Natural killer cell (primary cell): ENCODE measurements at regions of chr11 and their contacts with region 1.

Region 1: GRCh38 chr11:313787-314547 is at the start of gene IFITM1:
- DNase-seq: peak in 1 of 2 donors; percentile 80
- ATAC-seq: peak; percentile 24 to 59 (median 47)
- H3K4me3 ChIP-seq: peak within 1 kb of the TSS; percentile 75
- H3K4me3 Mint-ChIP-seq: peak within 1 kb of the TSS; percentile 97
- H3K27ac ChIP-seq: peak within 1 kb of the TSS; percentile 72
- H3K27ac Mint-ChIP-seq: peak within 1 kb of the TSS; percentile 92 to 99
- H3K4me1 ChIP-seq: peaks cover 45% of the 10 kb centered on the region
- H3K4me1 Mint-ChIP-seq: peaks cover 55 to 57% of the 10 kb centered on the region in 2 donors
- H3K27me3 ChIP-seq: no peaks in the 10 kb centered on the region
- H3K27me3 Mint-ChIP-seq: no peaks in the 10 kb centered on the region
- CTCF ChIP-seq: no peak
- total RNA-seq, gene IFITM1: 540 to 809 (median 710) TPM

Region 2: GRCh38 chr11:326842-327580 is 13.0 kb after region 1 on chr11:
- intact Hi-C with region 1: loop called (anchors 2 kb)
- DNase-seq: peak in 1 of 2 donors; percentile 89
- ATAC-seq: peak; percentile 51 to 75 (median 56)
- H3K4me3 ChIP-seq: peak overlapping the region; percentile 6
- H3K4me3 Mint-ChIP-seq: peak overlapping the region; percentile 67
- H3K27ac ChIP-seq: peak overlapping the region; percentile 89
- H3K27ac Mint-ChIP-seq: peak overlapping the region; percentile 78 to 94
- H3K4me1 ChIP-seq: peaks cover 73% of the 10 kb centered on the region
- H3K4me1 Mint-ChIP-seq: peaks cover 57 to 69% of the 10 kb centered on the region in 2 donors
- H3K27me3 ChIP-seq: no peaks in the 10 kb centered on the region
- H3K27me3 Mint-ChIP-seq: no peaks in the 10 kb centered on the region
- CTCF ChIP-seq: no peak

Region 3: DNA sequence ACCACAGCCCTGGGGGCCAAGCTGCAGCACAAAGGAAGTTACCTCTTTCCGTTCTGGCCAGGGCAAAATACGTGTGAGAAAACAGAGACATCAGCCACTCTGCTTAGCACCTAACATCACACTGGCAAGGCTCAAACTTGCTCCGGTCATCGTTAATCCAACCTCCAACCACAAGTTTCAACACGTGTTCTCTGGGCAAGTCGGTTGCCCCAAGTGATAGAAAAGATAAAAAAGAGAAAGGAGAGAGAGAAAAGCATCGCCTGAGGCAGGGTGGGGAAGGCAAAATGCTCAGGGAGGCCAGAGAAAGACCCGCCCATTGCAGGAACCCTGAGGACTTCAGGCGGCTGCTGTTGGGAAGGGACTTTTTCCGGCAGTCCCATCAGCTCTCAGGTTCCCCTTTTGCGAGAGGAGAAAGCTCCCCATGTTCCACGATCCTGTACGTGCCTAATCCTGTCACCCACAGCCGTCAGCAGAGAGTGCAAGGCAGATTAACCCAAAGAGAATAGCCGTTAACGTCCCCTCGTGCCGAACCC is 36.8 kb after region 1 on chr11:
- intact Hi-C with region 1: loop called (anchors 2 kb)
- DNase-seq: peak; percentile 43 to 49
- ATAC-seq: peak; percentile 74 to 87 (median 84)
- H3K4me3 ChIP-seq: no peak overlapping the region
- H3K4me3 Mint-ChIP-seq: peak overlapping the region; percentile 78
- H3K27ac ChIP-seq: peak overlapping the region; percentile 84
- H3K27ac Mint-ChIP-seq: peak overlapping the region; percentile 92 to 95
- H3K4me1 ChIP-seq: peaks cover 70% of the 10 kb centered on the region
- H3K4me1 Mint-ChIP-seq: peaks cover 43 to 58% of the 10 kb centered on the region in 2 donors
- H3K27me3 ChIP-seq: no peaks in the 10 kb centered on the region
- H3K27me3 Mint-ChIP-seq: no peaks in the 10 kb centered on the region
- CTCF ChIP-seq: no peak

Region 4: DNA sequence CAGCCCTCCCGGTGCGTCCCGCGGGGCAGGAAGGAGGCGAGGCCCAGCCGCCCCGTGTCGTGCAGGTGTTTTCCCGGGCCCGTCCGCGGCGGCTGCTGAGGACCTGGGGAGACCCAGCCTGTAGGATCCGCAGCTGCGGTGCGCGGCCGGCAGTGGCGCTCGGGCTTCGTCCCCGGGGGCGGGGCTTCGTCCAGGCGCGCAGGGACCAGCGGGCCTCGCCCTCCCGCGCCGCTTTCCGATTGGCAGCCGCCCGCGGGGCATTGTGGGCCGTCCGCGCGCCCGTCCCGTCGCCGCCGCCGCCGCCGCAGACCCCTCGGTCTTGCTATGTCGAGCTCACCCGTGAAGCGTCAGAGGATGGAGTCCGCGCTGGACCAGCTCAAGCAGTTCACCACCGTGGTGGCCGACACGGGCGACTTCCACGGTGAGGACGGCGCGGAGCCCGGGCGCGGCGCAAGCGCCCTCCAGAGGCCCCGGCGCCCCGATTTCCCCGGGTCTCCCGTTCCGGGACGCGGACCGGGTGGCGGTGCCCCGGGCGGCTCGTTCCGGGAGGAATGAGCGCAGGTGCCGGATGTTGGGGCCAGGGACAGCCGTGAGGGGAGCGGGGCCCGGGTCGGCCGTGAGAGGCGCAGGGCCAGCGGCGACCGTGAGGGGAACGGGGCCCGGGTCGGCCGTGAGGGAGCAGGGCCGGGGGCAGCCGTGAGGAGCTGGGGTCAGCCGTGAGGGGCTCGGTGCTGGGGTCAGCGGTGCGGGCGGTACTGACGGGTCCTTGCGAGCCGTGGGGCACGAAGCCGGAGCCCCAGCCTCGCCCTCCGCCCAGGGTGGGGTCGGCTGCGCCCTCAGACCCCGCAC is 433.4 kb after region 1 on chr11 and contains the start of gene TALDO1:
- intact Hi-C with region 1: no loop called
- DNase-seq: peak; percentile 77 to 86
- ATAC-seq: peak; percentile 91 to 93 (median 92)
- H3K4me3 ChIP-seq: peak within 1 kb of the TSS; percentile 56
- H3K4me3 Mint-ChIP-seq: peak within 1 kb of the TSS; percentile 93
- H3K27ac ChIP-seq: peak within 1 kb of the TSS; percentile 40
- H3K27ac Mint-ChIP-seq: peak within 1 kb of the TSS in 1 of 2 donors; percentile 83
- H3K4me1 ChIP-seq: peaks cover 22% of the 10 kb centered on the region
- H3K4me1 Mint-ChIP-seq: peaks cover 9 to 14% of the 10 kb centered on the region in 2 donors
- H3K27me3 ChIP-seq: no peaks in the 10 kb centered on the region
- H3K27me3 Mint-ChIP-seq: no peaks in the 10 kb centered on the region
- CTCF ChIP-seq: no peak
- total RNA-seq, gene TALDO1: 46.1 to 94.8 (median 55.4) TPM

Region 5: DNA sequence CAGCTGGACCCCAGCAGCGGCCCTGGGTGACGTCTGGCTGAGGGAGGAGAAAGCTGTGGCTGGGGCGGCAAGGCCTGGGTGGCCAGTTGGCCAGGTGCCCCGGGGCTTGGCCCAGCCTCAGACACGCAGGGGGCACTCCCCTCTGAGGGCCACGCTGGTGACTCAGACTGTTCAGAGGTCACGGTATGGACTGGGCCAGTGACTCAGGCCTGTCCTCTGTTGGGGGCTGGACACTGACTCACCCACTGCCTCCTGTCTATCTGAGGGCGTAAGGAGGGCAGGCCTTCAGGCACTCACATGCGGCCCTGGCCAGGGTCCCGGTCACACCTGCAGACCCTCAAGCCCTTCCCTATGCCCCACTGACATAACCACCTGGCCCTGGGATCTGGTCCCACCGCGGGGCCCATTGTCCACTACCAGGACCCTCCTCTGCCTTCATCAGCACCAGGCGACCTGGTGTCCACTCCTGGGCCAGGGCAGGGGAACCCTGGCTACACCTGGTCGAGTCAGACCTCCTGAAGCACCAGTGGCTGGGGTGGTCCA is 840.1 kb after region 1 on chr11:
- intact Hi-C with region 1: no loop called
- DNase-seq: peak in 1 of 2 donors; percentile 11
- ATAC-seq: peak in 2 of 3 donors; percentile 26 to 38
- H3K4me3 ChIP-seq: no peak overlapping the region
- H3K4me3 Mint-ChIP-seq: no peak overlapping the region
- H3K27ac ChIP-seq: no peak overlapping the region
- H3K27ac Mint-ChIP-seq: no peak overlapping the region
- H3K4me1 ChIP-seq: peaks cover 13% of the 10 kb centered on the region
- H3K4me1 Mint-ChIP-seq: no peaks in the 10 kb centered on the region
- H3K27me3 ChIP-seq: no peaks in the 10 kb centered on the region
- H3K27me3 Mint-ChIP-seq: no peaks in the 10 kb centered on the region
- CTCF ChIP-seq: no peak